PC-9 (cell line): ENCODE measurements at regions of chr11 and their contacts with region 1.

Region 1: GRCh38 chr11:129117595-129118350 is 74.4 kb downstream of the ARHGAP32 start:
- DNase-seq: peak; percentile 40 to 66
- H3K4me3 ChIP-seq: no peak overlapping the region
- H3K27ac ChIP-seq: no peak overlapping the region
- H3K4me1 ChIP-seq: peaks cover 22% of the 10 kb centered on the region
- H3K27me3 ChIP-seq: no peaks in the 10 kb centered on the region
- CTCF ChIP-seq: peak; percentile 95

Region 2: DNA sequence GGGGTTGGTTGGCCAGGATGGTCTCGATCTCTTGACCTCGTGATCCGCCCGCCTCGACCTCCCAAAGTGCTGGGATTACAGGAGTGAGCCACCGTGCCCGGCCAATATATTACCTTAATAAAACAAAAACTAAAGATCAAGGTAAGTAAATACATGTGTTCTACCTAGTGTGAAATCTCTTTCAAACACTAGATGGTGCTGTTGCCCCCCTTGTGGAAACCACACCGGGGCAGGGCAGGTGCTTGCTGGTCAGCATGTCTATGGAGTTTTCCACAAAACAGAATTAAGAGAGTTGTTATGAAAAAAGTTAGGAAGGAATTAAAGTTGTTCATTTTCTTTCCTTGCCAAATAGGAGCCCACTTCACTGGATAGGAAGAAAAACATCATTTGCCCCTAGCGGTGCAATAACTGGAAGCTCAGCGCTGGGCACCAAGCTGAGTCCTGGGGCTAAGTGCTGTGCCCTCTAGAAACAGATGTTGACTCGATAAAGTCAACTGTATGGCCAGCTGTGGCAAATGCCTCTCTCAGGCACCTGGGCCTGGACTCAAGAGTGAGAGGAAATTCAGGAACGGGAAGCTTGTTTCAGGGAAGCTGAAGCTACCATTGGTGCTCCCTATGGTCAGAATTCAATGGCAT is 233.0 kb before region 1 on chr11:
- CTCF ChIA-PET with region 1: no interaction called
- POLR2A ChIA-PET with region 1: no interaction called
- intact Hi-C with region 1: loop called (anchors 2 kb)
- DNase-seq: peak; percentile 67 to 70
- H3K4me3 ChIP-seq: no peak overlapping the region
- H3K27ac ChIP-seq: no peak overlapping the region
- H3K4me1 ChIP-seq: no peaks in the 10 kb centered on the region
- H3K27me3 ChIP-seq: peaks cover 22% of the 10 kb centered on the region; the same call in 1 of the 2 replicates
- CTCF ChIP-seq: peak; percentile 88

Region 3: DNA sequence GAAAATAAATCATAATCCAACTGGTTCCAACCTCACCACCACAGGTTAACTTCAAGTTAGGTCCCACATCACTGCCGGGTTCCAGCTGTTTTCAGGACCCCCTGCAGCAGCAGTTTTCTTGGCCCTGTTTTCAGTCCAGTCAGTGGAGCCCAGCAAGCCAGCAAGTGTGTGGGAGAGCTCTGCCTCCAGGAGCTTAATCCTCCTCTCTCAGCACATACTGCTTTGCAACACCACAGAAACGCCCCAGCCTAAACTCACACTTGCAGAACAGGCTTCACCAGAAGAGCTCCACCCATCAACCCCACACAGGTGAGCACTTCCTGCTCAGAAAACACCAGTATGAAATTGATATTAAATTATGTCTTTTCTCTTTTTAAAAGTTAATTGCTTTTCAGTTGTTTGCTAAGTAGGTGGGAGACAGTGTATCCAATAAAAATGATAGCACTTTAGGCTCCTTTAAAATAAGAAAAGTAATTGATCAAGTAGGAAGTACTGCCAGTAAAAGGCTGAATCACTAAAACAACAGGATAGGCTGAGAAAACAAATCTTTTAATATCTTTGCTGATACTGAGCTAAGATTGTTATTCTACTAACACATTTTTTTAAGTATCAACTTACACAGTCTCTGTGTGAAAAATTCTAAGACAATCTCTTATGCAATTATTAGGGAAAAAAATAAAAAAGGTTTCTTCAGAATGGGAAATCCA is 93.7 kb before region 1 on chr11:
- CTCF ChIA-PET with region 1: no interaction called
- POLR2A ChIA-PET with region 1: no interaction called
- intact Hi-C with region 1: loop called (anchors 2 kb)
- DNase-seq: peak; percentile 82 to 94
- H3K4me3 ChIP-seq: peak overlapping the region; percentile 69
- H3K27ac ChIP-seq: peak overlapping the region; percentile 96
- H3K4me1 ChIP-seq: peaks cover 35% of the 10 kb centered on the region
- H3K27me3 ChIP-seq: no peaks in the 10 kb centered on the region
- CTCF ChIP-seq: no peak

Region 4: GRCh38 chr11:129279326-129280026 is 161.7 kb after region 1 on chr11:
- CTCF ChIA-PET with region 1: no interaction called
- POLR2A ChIA-PET with region 1: no interaction called
- intact Hi-C with region 1: loop called (anchors 1 kb)
- DNase-seq: peak; percentile 54 to 86
- H3K4me3 ChIP-seq: peak overlapping the region; percentile 70
- H3K27ac ChIP-seq: no peak overlapping the region
- H3K4me1 ChIP-seq: peaks cover 50% of the 10 kb centered on the region
- H3K27me3 ChIP-seq: no peaks in the 10 kb centered on the region
- CTCF ChIP-seq: no peak

Region 5: DNA sequence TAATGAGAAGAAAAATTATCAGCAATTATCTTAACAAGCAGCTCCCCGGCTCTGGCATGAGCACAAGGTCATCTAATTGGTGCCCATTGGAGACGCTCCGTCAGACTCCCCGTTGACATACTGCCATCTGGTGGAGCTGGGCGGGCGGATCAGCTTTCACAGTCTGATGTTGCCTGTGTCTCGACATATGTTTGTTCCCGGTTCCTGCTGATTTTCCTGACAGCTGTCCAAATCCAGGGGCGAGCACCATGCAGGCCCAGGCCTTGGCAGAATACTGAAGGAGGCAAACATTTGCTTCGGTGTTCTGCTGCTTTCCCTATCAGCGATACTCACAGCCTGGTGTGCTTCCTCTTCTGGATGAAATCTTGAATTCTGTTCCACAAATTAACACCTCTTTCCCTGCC is 214.1 kb after region 1 on chr11:
- CTCF ChIA-PET with region 1: interaction called, 3 read pairs
- POLR2A ChIA-PET with region 1: no interaction called
- intact Hi-C with region 1: loop called (anchors 1 kb)
- DNase-seq: peak; percentile 71 to 79
- H3K4me3 ChIP-seq: no peak overlapping the region
- H3K27ac ChIP-seq: no peak overlapping the region
- H3K4me1 ChIP-seq: 0 out of 2 replicates have a peak, but pooled peaks cover 3% of the 10 kb centered on the region
- H3K27me3 ChIP-seq: no peaks in the 10 kb centered on the region
- CTCF ChIP-seq: peak; percentile 88

Region 6: DNA sequence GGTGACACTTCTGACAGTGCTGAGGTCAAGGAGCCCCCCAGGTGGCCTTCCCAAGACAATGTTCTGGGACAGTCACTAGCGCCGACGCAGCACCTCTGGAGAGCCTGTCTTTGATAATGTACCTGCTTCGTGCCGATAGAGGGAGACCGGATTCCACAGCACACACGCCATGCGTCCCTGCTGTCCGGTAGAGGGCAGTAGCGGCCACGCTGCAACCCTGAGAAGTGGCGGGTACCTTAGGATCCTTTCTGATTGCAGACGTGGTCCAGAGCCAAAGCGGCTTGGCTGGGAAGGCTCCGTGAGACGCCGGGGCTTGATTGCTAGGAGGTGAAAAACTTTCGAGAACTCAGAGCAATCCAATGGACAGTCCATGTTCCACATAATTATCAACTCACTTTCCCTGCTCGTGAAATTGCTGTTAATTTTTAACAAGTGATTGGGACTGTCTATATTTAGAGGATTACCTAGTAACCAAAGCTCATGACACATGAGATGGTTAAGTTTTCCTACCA is 246.4 kb after region 1 on chr11:
- CTCF ChIA-PET with region 1: no interaction called
- POLR2A ChIA-PET with region 1: no interaction called
- intact Hi-C with region 1: loop called (anchors 1 kb)
- DNase-seq: peak; percentile 85 to 87
- H3K4me3 ChIP-seq: no peak overlapping the region
- H3K27ac ChIP-seq: no peak overlapping the region
- H3K4me1 ChIP-seq: peaks cover 42% of the 10 kb centered on the region
- H3K27me3 ChIP-seq: no peaks in the 10 kb centered on the region
- CTCF ChIP-seq: peak; percentile 97

Region 7: GRCh38 chr11:129750349-129751292 is 632.8 kb after region 1 on chr11:
- CTCF ChIA-PET with region 1: no interaction called
- POLR2A ChIA-PET with region 1: no interaction called
- intact Hi-C with region 1: loop called (anchors 1 kb)
- DNase-seq: peak; percentile 67 to 84
- H3K4me3 ChIP-seq: peak overlapping the region; percentile 40; the same call in 1 of the 2 replicates
- H3K27ac ChIP-seq: no peak overlapping the region
- H3K4me1 ChIP-seq: 0 out of 2 replicates have a peak, but pooled peaks cover 5% of the 10 kb centered on the region
- H3K27me3 ChIP-seq: no peaks in the 10 kb centered on the region
- CTCF ChIP-seq: peak; percentile 93